Thyroid gland (tissue), 4 donors: ENCODE measurements at regions of chr3 and their contacts with region 1.

Region 1: DNA sequence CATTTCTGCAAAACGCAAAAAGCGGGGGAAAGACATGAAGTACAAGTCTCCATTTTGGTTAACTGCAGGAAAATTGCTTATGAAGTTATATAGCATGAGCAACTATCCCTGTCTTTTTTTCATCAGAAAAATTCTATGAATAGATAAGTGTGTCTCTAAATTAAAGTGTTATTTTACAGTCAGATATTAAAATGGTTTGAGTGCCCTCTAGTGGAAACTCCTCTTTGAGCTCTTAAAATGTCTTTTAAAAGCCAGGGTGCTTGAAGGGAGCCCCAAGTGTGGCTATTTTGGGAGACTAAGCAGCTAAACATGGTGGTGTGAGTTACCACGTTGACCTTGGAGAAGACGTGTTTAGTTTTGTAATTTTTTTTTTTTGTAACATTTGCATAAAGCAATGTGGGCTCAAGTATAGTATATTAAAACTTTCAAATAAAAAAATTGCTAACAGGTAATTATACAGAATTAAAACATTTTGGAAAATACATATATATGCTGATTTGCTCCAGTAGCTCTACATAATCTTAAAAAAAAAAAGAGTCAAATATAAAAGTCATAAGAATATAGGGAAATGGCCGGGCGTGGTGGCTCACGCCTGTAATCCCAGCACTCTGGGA is 77.2 kb downstream of the PPP2R3A start:
- DNase-seq: no peak
- H3K4me3 ChIP-seq: no peak overlapping the region
- H3K27ac ChIP-seq: no peak overlapping the region
- H3K4me1 ChIP-seq: no peaks in the 10 kb centered on the region
- H3K27me3 ChIP-seq: no peaks in the 10 kb centered on the region
- CTCF ChIP-seq: peak; percentile 18 to 70 (median 56)
- POLR2A ChIP-seq: no peak

Region 2: GRCh38 chr3:135779590-135780235 is 263.0 kb before region 1 on chr3:
- intact Hi-C with region 1: no loop called
- DNase-seq: no peak
- H3K4me3 ChIP-seq: no peak overlapping the region
- H3K27ac ChIP-seq: no peak overlapping the region
- H3K4me1 ChIP-seq: no peaks in the 10 kb centered on the region
- H3K27me3 ChIP-seq: no peaks in the 10 kb centered on the region
- CTCF ChIP-seq: no peak
- POLR2A ChIP-seq: no peak

Region 3: DNA sequence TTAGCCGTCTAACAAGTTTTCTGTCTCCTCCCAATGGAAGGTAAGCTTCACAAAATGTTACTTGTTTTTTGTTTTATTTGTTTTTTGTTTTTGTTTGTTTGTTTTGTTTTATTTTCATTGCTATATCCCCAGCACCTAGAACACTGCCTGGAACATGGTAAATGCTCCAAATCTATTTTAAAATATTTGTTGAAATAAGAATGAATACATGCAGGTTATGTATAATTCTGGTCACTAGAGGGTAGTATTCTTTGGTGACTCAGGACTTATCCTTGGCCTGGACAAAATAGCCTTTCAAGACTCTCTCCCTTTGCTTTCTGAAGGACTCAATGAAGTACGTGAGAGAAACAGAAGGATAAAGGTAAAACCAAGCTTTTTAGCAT is 124.1 kb before region 1 on chr3:
- intact Hi-C with region 1: loop called (anchors 5 kb)
- DNase-seq: no peak
- H3K4me3 ChIP-seq: no peak overlapping the region
- H3K27ac ChIP-seq: no peak overlapping the region
- H3K4me1 ChIP-seq: no peaks in the 10 kb centered on the region
- H3K27me3 ChIP-seq: no peaks in the 10 kb centered on the region
- CTCF ChIP-seq: peak in 5 of 6 experiments; percentile 9 to 58 (median 54)
- POLR2A ChIP-seq: no peak